ENCODE measurements at regions of chr5 and their contacts with region 1.

Region 1: GRCh38 chr5:67003935-67004729 is 192.5 kb downstream of the CD180 start:
- DNase-seq: peak; percentile 94

Region 2: DNA sequence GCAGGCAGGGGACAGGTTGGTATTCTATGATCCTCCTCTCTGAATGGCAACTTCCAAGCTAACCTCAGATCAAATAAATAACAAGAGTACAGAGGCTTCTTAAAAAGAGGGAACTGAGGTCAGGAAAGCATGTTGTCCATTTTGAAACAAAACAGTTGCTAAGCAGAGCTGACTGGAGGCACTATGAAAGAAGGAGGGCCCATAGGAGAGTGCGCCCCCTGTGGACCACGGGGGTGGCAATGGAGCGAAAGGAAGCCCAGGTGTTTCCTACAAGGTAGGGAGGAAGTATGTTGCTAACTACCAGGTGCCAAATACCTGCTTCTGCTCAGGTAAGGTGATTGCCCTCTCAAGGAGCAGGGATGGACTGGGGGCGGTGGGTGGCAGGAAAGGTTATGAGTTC is 509.7 kb before region 1 on chr5:
- intact Hi-C with region 1: no loop called
- DNase-seq: no peak

Region 3: GRCh38 chr5:67065237-67065636 is 61.1 kb after region 1 on chr5:
- intact Hi-C with region 1: no loop called
- DNase-seq: no peak

Region 4: GRCh38 chr5:67095346-67096171 is 91.4 kb after region 1 on chr5:
- intact Hi-C with region 1: loop called in 1 of 2 experiments (anchors 10 kb)
- DNase-seq: peak; percentile 89

Region 5: GRCh38 chr5:67887641-67888161 is 883.6 kb after region 1 on chr5:
- intact Hi-C with region 1: no loop called
- DNase-seq: no peak

Measured in posterior vena cava (tissue), 2 donors.